ENCODE measurements at regions of chr7 and their contacts with region 1.

Region 1: DNA sequence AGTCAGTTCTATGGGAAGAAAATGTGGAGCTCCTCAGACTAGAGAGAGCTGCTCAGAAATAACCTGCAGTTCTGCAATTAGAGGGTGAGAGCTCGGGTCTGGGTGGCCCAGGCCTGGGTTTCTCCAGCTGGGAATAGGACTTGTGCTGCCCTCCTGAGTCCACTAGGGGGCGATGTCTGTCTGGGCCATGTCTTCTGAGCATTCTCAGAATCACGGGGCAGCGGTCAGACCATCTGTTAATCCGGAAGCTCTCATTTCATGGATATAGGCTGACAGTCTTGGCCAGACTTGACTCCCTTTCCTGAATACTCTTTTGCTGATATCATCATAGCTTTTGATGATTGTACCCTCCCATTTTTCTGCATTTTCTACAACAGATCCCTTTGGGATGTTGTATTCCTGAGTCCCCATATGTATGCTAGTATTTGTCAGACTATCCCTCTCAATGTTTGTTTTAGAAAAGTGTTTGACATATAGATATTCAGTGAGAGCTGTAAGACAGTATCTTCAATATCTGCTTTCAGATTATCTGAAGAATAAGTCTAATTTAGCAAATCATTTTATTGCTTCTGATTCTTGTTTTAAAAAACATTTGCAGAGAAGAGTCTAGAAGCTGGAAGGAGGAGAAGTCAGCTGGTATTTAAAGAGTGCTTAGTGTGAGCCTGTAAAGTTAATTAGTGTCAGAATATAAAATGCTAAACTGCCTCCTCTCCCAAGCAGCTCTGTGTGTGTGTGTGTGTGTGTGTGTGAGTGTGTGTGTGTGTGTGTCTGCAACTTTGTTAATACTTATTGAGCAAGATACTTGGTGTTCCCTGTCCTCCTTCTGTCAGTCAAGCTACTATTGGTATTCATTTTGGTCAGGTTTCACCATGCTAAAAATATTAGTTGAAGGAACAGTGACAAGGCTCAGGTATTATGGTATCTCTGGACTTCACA is 38.0 kb downstream of the STARD3NL start:
- DNase-seq: peak; percentile 86
- ATAC-seq: peak; percentile 87
- H3K4me3 Mint-ChIP-seq: no peak overlapping the region
- H3K27ac Mint-ChIP-seq: peak overlapping the region; percentile 7
- H3K4me1 Mint-ChIP-seq: peaks cover 31% of the 10 kb centered on the region
- H3K27me3 Mint-ChIP-seq: no peaks in the 10 kb centered on the region

Region 2: GRCh38 chr7:36871863-36872262 is 1344.1 kb before region 1 on chr7:
- CTCF ChIA-PET with region 1: no interaction called
- POLR2A ChIA-PET with region 1: no interaction called
- intact Hi-C with region 1: no loop called
- DNase-seq: no peak
- ATAC-seq: peak; percentile 30
- H3K4me3 Mint-ChIP-seq: no peak overlapping the region
- H3K27ac Mint-ChIP-seq: no peak overlapping the region
- H3K4me1 Mint-ChIP-seq: peaks cover 4% of the 10 kb centered on the region
- H3K27me3 Mint-ChIP-seq: no peaks in the 10 kb centered on the region

Region 3: GRCh38 chr7:38178004-38178694 is 37.9 kb before region 1 on chr7 and contains the start of gene STARD3NL:
- CTCF ChIA-PET with region 1: interaction called, 17 read pairs
- POLR2A ChIA-PET with region 1: interaction called, 3 read pairs
- intact Hi-C with region 1: loop called in 1 of 2 experiments (anchors 5 kb)
- DNase-seq: peak; percentile 92
- ATAC-seq: peak; percentile 100
- H3K4me3 Mint-ChIP-seq: peak within 1 kb of the TSS; percentile 95
- H3K27ac Mint-ChIP-seq: peak within 1 kb of the TSS; percentile 93
- H3K4me1 Mint-ChIP-seq: peaks cover 37% of the 10 kb centered on the region
- H3K27me3 Mint-ChIP-seq: peaks cover 10% of the 10 kb centered on the region
- total RNA-seq, gene STARD3NL: 27.9 to 30.8 TPM

Region 4: GRCh38 chr7:38195804-38196595 is 20.0 kb before region 1 on chr7:
- CTCF ChIA-PET with region 1: interaction called, 71 read pairs
- POLR2A ChIA-PET with region 1: no interaction called
- intact Hi-C with region 1: no loop called
- DNase-seq: no peak
- ATAC-seq: no peak
- H3K4me3 Mint-ChIP-seq: no peak overlapping the region
- H3K27ac Mint-ChIP-seq: no peak overlapping the region
- H3K4me1 Mint-ChIP-seq: peaks cover 22% of the 10 kb centered on the region
- H3K27me3 Mint-ChIP-seq: no peaks in the 10 kb centered on the region

Region 5: GRCh38 chr7:38318803-38319416 is 102.9 kb after region 1 on chr7:
- CTCF ChIA-PET with region 1: interaction called, 21 read pairs
- POLR2A ChIA-PET with region 1: no interaction called
- intact Hi-C with region 1: loop called in 1 of 2 experiments (anchors 5 kb)
- DNase-seq: peak; percentile 22
- ATAC-seq: peak; percentile 77
- H3K4me3 Mint-ChIP-seq: no peak overlapping the region
- H3K27ac Mint-ChIP-seq: no peak overlapping the region
- H3K4me1 Mint-ChIP-seq: peaks cover 18% of the 10 kb centered on the region
- H3K27me3 Mint-ChIP-seq: no peaks in the 10 kb centered on the region

Measured in activated CD4-positive, alpha-beta T cell treated with anti-CD3 and anti-CD28 coated beads for 36 hours (primary cell).